ENCODE measurements at regions of chr1 and their contacts with region 1.

Region 1: DNA sequence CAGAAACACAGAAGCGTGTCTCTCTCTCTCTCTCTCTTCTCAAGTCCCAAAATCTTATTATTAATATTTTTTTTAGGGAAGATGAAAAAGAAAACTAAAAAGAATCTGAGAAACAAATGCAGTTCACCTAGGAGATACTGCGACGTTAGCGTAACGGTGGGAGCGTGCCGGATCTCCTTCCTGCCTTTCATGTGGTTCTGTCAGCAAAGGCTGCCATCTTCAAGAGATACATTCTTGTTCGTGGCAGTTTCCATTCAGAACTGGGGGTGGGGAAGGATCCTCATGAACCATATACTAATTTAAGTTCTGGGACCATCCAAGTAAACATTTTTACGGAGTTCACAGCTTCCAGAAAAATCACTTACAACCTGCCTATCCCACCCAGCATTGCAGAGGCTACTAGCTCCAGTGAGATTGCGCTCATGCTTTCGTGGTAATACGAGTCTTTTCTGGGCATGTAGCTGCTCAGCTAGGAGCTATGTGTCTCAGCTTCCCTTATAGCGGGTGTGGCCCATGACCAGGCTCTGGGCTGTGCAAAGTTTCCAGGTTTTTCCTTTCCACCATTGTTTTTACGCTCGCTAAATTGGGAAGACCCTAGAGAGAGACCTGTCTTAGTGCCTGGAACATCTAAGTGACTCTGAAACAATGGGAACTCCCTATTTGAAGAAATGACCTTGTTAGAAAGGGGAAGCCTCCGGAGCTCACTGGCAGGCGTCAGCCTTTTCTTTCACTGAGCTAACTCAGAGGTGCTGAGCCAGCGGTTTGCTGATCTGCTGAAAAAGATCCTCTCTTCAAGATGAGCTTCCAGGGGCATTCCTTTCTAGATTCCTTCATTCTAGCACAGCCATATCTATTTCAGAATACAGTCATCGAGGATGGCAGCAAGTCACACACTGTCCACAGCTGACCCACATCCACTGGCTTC is 17.3 kb downstream of the SLAMF1 start:
- DNase-seq: peak; percentile 91
- H3K4me3 Mint-ChIP-seq: peak overlapping the region; percentile 64
- H3K27ac Mint-ChIP-seq: peak overlapping the region; percentile 97
- H3K4me1 Mint-ChIP-seq: peaks cover 97% of the 10 kb centered on the region
- H3K27me3 Mint-ChIP-seq: no peaks in the 10 kb centered on the region

Region 2: DNA sequence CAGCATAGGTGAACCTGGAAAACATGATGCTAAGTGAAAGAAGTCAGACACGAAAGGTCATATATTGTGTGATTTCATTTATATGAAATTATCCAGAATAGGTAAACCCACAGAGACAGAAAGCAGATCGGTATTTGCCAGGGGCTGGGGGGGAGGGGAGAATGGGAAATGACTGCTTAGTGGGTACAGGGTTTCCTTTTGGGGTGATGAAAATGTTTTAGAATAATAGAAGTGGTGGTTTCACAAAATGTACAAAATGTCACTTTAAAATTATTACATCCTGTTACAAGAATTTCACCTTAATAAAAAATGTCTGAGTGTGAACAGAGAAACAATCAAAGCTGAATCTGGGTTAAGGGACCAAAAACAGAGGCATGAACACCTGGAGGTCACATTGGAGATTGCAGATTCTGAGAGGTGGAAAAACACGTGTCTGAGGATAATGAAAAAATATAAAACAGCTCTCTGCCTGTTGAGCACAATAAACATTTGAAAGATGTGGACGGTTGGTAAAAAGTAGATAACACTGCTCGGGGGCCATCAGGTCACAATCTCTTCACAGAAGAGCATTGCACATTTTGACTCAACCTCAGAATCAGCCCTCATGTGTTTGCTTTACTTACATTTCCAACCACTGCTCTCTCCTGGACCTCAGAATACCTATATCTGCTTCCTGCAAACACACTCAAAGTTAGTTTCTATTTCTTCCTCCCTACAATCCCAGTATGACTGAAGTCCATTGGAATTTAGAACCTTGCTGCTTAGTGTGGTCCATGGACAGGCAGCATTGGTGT is 109.7 kb before region 1 on chr1:
- CTCF ChIA-PET with region 1: no interaction called
- DNase-seq: peak; percentile 36
- H3K4me3 Mint-ChIP-seq: peak overlapping the region; percentile 84
- H3K27ac Mint-ChIP-seq: peak overlapping the region; percentile 95
- H3K4me1 Mint-ChIP-seq: peaks cover 90% of the 10 kb centered on the region
- H3K27me3 Mint-ChIP-seq: no peaks in the 10 kb centered on the region

Region 3: GRCh38 chr1:160581961-160582360 is 47.6 kb before region 1 on chr1:
- CTCF ChIA-PET with region 1: no interaction called
- DNase-seq: no peak
- H3K4me3 Mint-ChIP-seq: no peak overlapping the region
- H3K27ac Mint-ChIP-seq: no peak overlapping the region
- H3K4me1 Mint-ChIP-seq: peaks cover 42% of the 10 kb centered on the region
- H3K27me3 Mint-ChIP-seq: no peaks in the 10 kb centered on the region

Region 4: GRCh38 chr1:160618763-160619274 is 10.7 kb before region 1 on chr1:
- CTCF ChIA-PET with region 1: interaction called, 22 read pairs
- DNase-seq: peak; percentile 52
- H3K4me3 Mint-ChIP-seq: no peak overlapping the region
- H3K27ac Mint-ChIP-seq: peak overlapping the region; percentile 44
- H3K4me1 Mint-ChIP-seq: peaks cover 72% of the 10 kb centered on the region
- H3K27me3 Mint-ChIP-seq: no peaks in the 10 kb centered on the region

Region 5: GRCh38 chr1:160639652-160640051 is 10.1 kb after region 1 on chr1:
- CTCF ChIA-PET with region 1: interaction called, 23 read pairs
- DNase-seq: no peak
- H3K4me3 Mint-ChIP-seq: peak overlapping the region; percentile 68
- H3K27ac Mint-ChIP-seq: peak overlapping the region; percentile 94
- H3K4me1 Mint-ChIP-seq: peaks cover 96% of the 10 kb centered on the region
- H3K27me3 Mint-ChIP-seq: no peaks in the 10 kb centered on the region

Region 6: GRCh38 chr1:160646711-160647328 is 17.3 kb after region 1 on chr1 and contains the start of gene SLAMF1:
- CTCF ChIA-PET with region 1: interaction called, 12 read pairs
- DNase-seq: peak; percentile 48
- H3K4me3 Mint-ChIP-seq: peak within 1 kb of the TSS; percentile 89
- H3K27ac Mint-ChIP-seq: peak within 1 kb of the TSS; percentile 92
- H3K4me1 Mint-ChIP-seq: peaks cover 68% of the 10 kb centered on the region
- H3K27me3 Mint-ChIP-seq: no peaks in the 10 kb centered on the region